Activated T-helper 1 cell treated with anti-CD3 and anti-CD28 coated beads, Interleukin-12 subunit alpha, Interleukin-12 subunit beta, Interleukin-2, Interleukin-4 antibody, amounts not matched to agents 30 ng/mL and 10 ng/mL and 1 ng/mL, durations not matched to agents 14 hours and 24 hours and 36 hours (primary cell): ENCODE measurements at regions of chr14 and their contacts with region 1.

Region 1: GRCh38 chr14:70907176-70907995 is at the start of gene PCNX1:
- DNase-seq: peak; percentile 84
- H3K4me3 Mint-ChIP-seq: peak within 1 kb of the TSS; percentile 86
- H3K27ac Mint-ChIP-seq: peak within 1 kb of the TSS; percentile 94
- H3K4me1 Mint-ChIP-seq: peaks cover 59% of the 10 kb centered on the region
- H3K27me3 Mint-ChIP-seq: peaks cover 2% of the 10 kb centered on the region
- total RNA-seq, gene PCNX1: 37.9 and 42.7 TPM in 2 replicates

Region 2: DNA sequence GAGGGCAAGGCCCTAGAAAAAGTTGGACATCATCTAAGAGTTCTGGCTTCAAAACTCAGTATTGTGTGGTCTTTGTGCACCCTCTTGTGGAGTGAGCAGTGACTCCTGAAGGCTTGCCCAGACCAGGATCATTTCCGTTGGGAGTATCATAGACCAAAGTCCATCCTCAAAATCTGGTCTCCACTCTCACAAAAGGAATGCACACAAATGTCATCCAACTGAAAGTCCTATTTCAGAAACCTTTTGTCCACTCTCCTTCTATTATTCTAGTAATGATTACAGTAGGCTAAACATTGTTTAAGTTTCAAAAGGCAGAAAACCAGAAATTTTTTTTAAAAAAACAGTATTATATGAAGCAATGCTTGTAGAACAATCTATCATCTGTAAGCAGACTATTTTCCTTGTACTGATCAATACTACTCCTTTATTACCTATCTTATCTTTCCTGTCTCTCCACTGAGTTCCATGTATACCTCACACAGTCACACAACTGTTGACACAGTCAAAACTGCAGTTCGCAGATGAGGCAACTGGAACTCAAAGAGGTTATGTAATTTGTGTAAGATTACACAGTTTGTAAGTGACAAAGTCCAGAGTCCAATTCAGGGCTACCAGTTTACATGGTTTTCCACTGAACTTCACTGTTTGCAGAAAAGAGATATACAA is 589.3 kb before region 1 on chr14:
- intact Hi-C with region 1: no loop called
- DNase-seq: no peak
- H3K4me3 Mint-ChIP-seq: no peak overlapping the region
- H3K27ac Mint-ChIP-seq: no peak overlapping the region
- H3K4me1 Mint-ChIP-seq: no peaks in the 10 kb centered on the region
- H3K27me3 Mint-ChIP-seq: peaks cover 6% of the 10 kb centered on the region

Region 3: DNA sequence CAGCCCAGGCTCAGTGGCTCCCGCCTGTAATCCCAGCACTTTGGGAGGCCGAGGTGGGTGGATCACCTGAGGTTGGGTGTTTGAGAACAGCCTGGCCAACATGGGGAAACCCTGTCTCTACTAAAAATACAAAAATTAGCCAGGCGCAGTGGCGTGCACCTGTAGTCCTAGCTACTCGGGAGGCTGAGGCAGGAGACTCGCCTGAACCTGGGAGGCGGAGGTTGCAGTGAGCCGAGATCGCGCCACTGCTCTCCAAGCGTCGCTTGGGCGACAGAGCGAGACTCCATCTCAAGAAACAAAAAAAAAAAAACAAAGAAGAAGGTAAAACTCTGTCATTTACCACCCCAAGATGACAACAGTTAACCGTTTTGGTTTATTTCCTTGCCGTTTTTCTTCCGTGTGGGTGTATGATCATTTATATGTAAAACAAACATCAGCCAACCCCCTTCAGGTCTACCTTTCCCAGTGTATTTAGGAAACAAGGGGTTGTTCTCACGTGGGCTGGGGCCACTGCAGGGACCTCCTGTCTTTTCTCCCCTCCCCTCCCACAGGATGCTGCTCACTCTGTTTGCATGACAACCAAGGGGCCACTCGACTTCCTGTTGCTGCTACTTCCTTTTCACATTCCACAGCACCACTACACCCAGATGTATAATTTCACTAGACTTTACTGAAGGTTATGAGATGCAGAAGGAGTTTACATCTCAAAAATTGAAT is 252.1 kb before region 1 on chr14:
- intact Hi-C with region 1: loop called (anchors 2 kb)
- DNase-seq: peak; percentile 72
- H3K4me3 Mint-ChIP-seq: peak overlapping the region; percentile 74
- H3K27ac Mint-ChIP-seq: peak overlapping the region; percentile 97
- H3K4me1 Mint-ChIP-seq: peaks cover 85% of the 10 kb centered on the region
- H3K27me3 Mint-ChIP-seq: no peaks in the 10 kb centered on the region

Region 4: DNA sequence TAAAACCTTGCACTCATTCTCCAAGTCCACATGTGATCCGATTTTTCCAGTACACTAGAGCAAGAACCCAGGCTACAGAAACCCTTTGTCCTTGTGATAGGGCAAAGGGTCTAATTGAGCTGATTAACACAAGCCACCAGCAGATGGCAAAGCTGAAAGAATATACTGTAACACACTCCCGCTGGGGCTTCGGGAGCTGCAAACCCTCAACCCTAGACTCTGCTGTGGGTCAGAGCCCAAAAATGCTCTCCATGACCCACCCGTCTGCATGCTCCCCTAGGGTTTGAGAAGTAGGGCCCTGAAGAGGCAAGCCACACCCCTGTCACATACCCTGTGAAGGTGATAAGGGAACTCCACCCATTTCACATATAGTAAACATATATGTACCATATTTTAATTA is 33.8 kb before region 1 on chr14:
- intact Hi-C with region 1: loop called (anchors 1 kb)
- DNase-seq: no peak
- H3K4me3 Mint-ChIP-seq: no peak overlapping the region
- H3K27ac Mint-ChIP-seq: no peak overlapping the region
- H3K4me1 Mint-ChIP-seq: peaks cover 24% of the 10 kb centered on the region
- H3K27me3 Mint-ChIP-seq: no peaks in the 10 kb centered on the region

Region 5: DNA sequence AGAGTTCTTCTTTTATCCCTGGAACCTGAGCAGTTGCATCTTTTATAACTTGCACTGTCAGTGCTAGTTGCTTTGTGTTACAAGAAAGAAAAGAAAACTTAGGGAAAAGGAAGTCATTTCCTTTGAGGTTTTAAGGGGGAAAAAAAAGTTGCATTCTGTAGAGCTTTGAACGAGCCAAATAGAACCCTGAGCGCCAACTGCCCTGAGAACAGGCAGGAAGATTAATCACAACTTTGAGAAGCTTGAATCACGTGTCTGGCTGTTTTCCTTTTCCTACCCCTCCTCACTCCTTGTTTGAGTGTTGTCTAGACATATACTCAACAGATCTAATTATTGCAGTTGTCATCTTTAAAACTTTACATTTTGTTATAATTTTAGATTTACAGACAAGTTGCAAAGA is 12.4 kb after region 1 on chr14:
- intact Hi-C with region 1: loop called (anchors 1 kb)
- DNase-seq: no peak
- H3K4me3 Mint-ChIP-seq: no peak overlapping the region
- H3K27ac Mint-ChIP-seq: no peak overlapping the region
- H3K4me1 Mint-ChIP-seq: peaks cover 77% of the 10 kb centered on the region
- H3K27me3 Mint-ChIP-seq: no peaks in the 10 kb centered on the region

Region 6: GRCh38 chr14:70955543-70956480 is 48.4 kb after region 1 on chr14:
- intact Hi-C with region 1: loop called (anchors 1 kb)
- DNase-seq: peak; percentile 19
- H3K4me3 Mint-ChIP-seq: no peak overlapping the region
- H3K27ac Mint-ChIP-seq: no peak overlapping the region
- H3K4me1 Mint-ChIP-seq: peaks cover 20% of the 10 kb centered on the region
- H3K27me3 Mint-ChIP-seq: no peaks in the 10 kb centered on the region